Prostate gland (tissue), 2 donors: ENCODE measurements at regions of chr21 and their contacts with region 1.

Region 1: GRCh38 chr21:42593007-42593806 is 60.2 kb upstream of the PDE9A start:
- DNase-seq: peak; percentile 73
- H3K4me3 ChIP-seq: no peak overlapping the region
- H3K27ac ChIP-seq: no peak overlapping the region
- H3K4me1 ChIP-seq: no peaks in the 10 kb centered on the region
- H3K27me3 ChIP-seq: no peaks in the 10 kb centered on the region
- CTCF ChIP-seq: peak; percentile 60 to 80 (median 74)
- POLR2A ChIP-seq: no peak

Region 2: GRCh38 chr21:42818328-42818749 is 225.1 kb after region 1 on chr21:
- intact Hi-C with region 1: loop called (anchors 2 kb)
- DNase-seq: peak; percentile 66
- H3K4me3 ChIP-seq: no peak overlapping the region
- H3K27ac ChIP-seq: no peak overlapping the region
- H3K4me1 ChIP-seq: no peaks in the 10 kb centered on the region
- H3K27me3 ChIP-seq: no peaks in the 10 kb centered on the region
- CTCF ChIP-seq: peak; percentile 80 to 96 (median 89)
- POLR2A ChIP-seq: no peak